ENCODE measurements at regions of chr10 and their contacts with region 1.

Region 1: GRCh38 chr10:58334817-58335305 is at the start of gene UBE2D1:
- DNase-seq: peak; percentile 94 to 97
- ATAC-seq: peak; percentile 97
- H3K4me3 ChIP-seq: peak within 1 kb of the TSS; percentile 78 to 80
- H3K27ac ChIP-seq: peak within 1 kb of the TSS; percentile 12 to 23
- H3K4me1 ChIP-seq: no peaks in the 10 kb centered on the region
- H3K27me3 ChIP-seq: no peaks in the 10 kb centered on the region
- total RNA-seq, gene UBE2D1: 15.6 to 17.8 TPM

Region 2: DNA sequence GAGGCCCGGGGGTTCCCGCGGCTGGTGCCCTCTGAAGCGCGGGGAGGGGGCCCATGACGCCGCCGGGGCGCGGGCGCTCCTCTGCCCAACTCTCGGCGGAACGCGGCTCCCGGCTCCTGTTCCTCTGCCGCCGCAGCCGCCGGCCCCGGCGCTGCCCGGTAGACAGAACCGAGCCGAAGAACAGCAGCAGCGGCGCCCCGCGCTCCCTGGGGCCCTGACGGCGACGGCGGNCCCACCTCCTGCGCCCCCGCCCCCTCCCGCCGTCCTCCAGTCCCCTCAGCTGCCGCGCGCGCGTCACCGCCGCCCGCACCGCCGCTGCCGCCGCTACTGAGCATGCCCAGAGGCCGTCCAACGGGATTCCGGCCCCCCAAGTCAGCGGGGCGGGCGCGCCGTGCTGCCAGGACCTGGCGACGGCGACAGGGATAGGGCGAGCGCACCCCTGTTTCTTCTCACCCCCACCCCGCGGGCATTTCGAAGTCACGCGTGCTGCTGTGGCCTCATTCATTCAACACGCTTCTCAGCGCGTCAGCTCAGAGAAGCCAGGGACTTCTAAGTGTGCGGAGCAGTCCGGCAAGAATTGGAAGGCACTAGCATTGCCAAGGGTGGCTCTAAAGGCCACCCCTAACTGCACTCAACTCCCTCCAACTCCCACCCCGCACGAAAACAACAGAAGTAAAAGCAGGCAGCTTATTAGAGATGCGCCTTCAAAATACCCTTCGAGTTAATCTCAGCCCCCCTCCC is 67.0 kb before region 1 on chr10 and contains the start of gene IPMK:
- intact Hi-C with region 1: loop called in 1 of 2 experiments (anchors 2 kb)
- DNase-seq: peak; percentile 97 to 98
- ATAC-seq: peak; percentile 92
- H3K4me3 ChIP-seq: peak within 1 kb of the TSS; percentile 70 to 71
- H3K27ac ChIP-seq: peak within 1 kb of the TSS; percentile 32 to 96
- H3K4me1 ChIP-seq: no peaks in the 10 kb centered on the region
- H3K27me3 ChIP-seq: no peaks in the 10 kb centered on the region
- total RNA-seq, gene IPMK: 4.5 to 8.1 TPM

Region 3: GRCh38 chr10:58384999-58385783 is 50.3 kb after region 1 on chr10 and contains the start of gene TFAM:
- intact Hi-C with region 1: loop called (anchors 2 to 5 kb)
- DNase-seq: peak; percentile 97 to 99
- ATAC-seq: peak; percentile 99
- H3K4me3 ChIP-seq: peak within 1 kb of the TSS; percentile 57 to 71
- H3K27ac ChIP-seq: peak within 1 kb of the TSS; percentile 76 to 80
- H3K4me1 ChIP-seq: peaks cover 2 to 4% of the 10 kb centered on the region in 2 donors
- H3K27me3 ChIP-seq: no peaks in the 10 kb centered on the region
- total RNA-seq, gene TFAM: 20.0 to 25.5 TPM

Region 4: DNA sequence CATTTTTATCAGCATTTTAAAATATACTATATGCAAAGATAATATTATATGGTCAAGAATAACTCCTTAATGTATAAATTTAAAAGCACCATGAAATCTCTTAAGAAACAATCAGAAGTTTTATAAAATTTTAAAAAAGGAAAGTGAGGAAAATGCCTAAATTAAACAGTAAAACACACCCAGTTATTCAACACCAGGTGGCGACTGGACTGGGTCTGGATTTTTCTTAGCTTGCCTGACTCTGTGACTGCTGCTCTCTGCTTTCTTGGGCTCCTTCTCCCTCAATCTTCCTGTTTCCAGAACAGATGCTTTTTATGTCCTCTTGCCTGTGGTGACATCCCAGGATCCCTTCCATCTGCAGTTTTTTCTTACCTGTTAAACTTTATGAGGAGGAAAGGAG is 378.1 kb after region 1 on chr10:
- intact Hi-C with region 1: no loop called
- DNase-seq: no peak
- ATAC-seq: no peak
- H3K4me3 ChIP-seq: no peak overlapping the region
- H3K27ac ChIP-seq: no peak overlapping the region
- H3K4me1 ChIP-seq: peaks cover 4% of the 10 kb centered on the region in 2 donors
- H3K27me3 ChIP-seq: no peaks in the 10 kb centered on the region